ENCODE measurements at regions of chr10 and their contacts with region 1.

Region 1: GRCh38 chr10:110206995-110207804 is at the start of gene MXI1:
- DNase-seq: peak; percentile 70 to 87 (median 79)
- ATAC-seq: peak; percentile 16
- H3K4me3 ChIP-seq: peak within 1 kb of the TSS; percentile 41 to 62
- H3K27ac ChIP-seq: peak within 1 kb of the TSS; percentile 76 to 97 (median 96)
- H3K4me1 ChIP-seq: peaks cover 17% of the 10 kb centered on the region
- H3K27me3 ChIP-seq: no peaks in the 10 kb centered on the region
- CTCF ChIP-seq: peak in 1 of 7 experiments; percentile 5
- POLR2A ChIP-seq: peak; percentile 21 to 54 (median 44)
- total RNA-seq, gene MXI1: 14.8 to 24.1 TPM

Region 2: GRCh38 chr10:110137142-110137545 is 70.1 kb before region 1 on chr10:
- intact Hi-C with region 1: loop called (anchors 10 kb)
- DNase-seq: peak in 1 of 4 donors; percentile 37
- ATAC-seq: peak; percentile 91
- H3K4me3 ChIP-seq: no peak overlapping the region
- H3K27ac ChIP-seq: peak overlapping the region in 3 of 4 donors; percentile 35 to 73 (median 45)
- H3K4me1 ChIP-seq: peaks cover 18% of the 10 kb centered on the region
- H3K27me3 ChIP-seq: no peaks in the 10 kb centered on the region
- CTCF ChIP-seq: peak; percentile 58 to 96 (median 93)
- POLR2A ChIP-seq: no peak

Region 3: GRCh38 chr10:110168601-110169481 is 38.4 kb before region 1 on chr10:
- intact Hi-C with region 1: no loop called
- DNase-seq: no peak
- ATAC-seq: no peak
- H3K4me3 ChIP-seq: no peak overlapping the region
- H3K27ac ChIP-seq: no peak overlapping the region
- H3K4me1 ChIP-seq: peaks cover 14% of the 10 kb centered on the region
- H3K27me3 ChIP-seq: no peaks in the 10 kb centered on the region
- CTCF ChIP-seq: no peak
- POLR2A ChIP-seq: no peak